H1 (cell line): ENCODE measurements at regions of chr2 and their contacts with region 1.

Region 1: GRCh38 chr2:20097879-20098714 is 46.7 kb upstream of the LAPTM4A start:
- DNase-seq: peak; percentile 91
- H3K4me3 ChIP-seq: no peak overlapping the region
- H3K27ac ChIP-seq: no peak overlapping the region
- H3K4me1 ChIP-seq: peaks cover 3 to 10% (median 5%) of the 10 kb centered on the region in 4 experiments; a peak in 6 of 7 replicates
- H3K27me3 ChIP-seq: no peaks in the 10 kb centered on the region
- CTCF ChIP-seq: peak; percentile 97 to 99 (median 99)
- EP300 ChIP-seq: peak in 1 of 2 experiments; percentile 97; a peak in 2 of 3 replicates
- POLR2A ChIP-seq: no peak
- RAD21 ChIP-seq: peak; percentile 99

Region 2: GRCh38 chr2:19955544-19956422 is 142.3 kb before region 1 on chr2:
- CTCF ChIA-PET with region 1: interaction called, 31 read pairs
- POLR2A ChIA-PET with region 1: no interaction called
- DNase-seq: peak; percentile 36 to 52
- H3K4me3 ChIP-seq: no peak overlapping the region
- H3K27ac ChIP-seq: no peak overlapping the region
- H3K4me1 ChIP-seq: no peaks in the 10 kb centered on the region
- H3K27me3 ChIP-seq: no peaks in the 10 kb centered on the region
- CTCF ChIP-seq: peak; percentile 58 to 98 (median 68)
- EP300 ChIP-seq: no peak
- POLR2A ChIP-seq: no peak
- RAD21 ChIP-seq: peak; percentile 89 to 90

Region 3: DNA sequence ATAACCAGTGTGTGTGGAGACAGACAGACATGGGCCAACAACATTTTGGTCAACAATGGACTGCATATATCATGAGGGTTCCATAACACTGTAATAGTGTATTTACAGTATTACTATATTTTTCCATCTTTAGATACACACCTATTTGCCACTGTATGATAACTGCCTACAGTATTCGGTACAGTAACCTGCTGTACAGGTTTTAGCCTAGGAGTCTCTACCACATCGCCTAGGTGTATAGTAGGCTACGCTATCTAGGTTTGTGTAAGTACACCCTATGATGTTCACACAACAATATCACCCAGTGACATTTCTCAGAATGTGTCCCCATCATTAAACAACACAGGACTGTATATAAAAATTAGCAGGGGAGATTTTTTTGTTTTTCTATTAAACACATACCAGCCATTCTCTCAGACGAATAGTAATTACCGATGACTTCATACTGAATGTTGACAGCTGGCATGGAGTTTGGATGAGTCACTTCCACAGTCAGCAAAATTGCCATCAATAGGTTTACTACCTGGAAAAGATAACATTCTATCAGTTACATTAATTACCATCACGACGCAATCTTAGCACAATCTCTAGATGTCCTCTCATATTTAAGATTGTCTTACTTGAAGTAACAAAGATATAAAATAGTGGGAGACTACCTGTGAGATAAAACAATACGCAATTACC is 57.5 kb before region 1 on chr2:
- CTCF ChIA-PET with region 1: interaction called, 12 read pairs
- POLR2A ChIA-PET with region 1: no interaction called
- DNase-seq: no peak
- H3K4me3 ChIP-seq: no peak overlapping the region
- H3K27ac ChIP-seq: no peak overlapping the region
- H3K4me1 ChIP-seq: 0 out of 7 replicates have a peak, but pooled peaks cover 0 to 2% (median 0%) of the 10 kb centered on the region in 4 experiments
- H3K27me3 ChIP-seq: no peaks in the 10 kb centered on the region
- CTCF ChIP-seq: no peak
- EP300 ChIP-seq: no peak
- POLR2A ChIP-seq: no peak
- RAD21 ChIP-seq: no peak

Region 4: DNA sequence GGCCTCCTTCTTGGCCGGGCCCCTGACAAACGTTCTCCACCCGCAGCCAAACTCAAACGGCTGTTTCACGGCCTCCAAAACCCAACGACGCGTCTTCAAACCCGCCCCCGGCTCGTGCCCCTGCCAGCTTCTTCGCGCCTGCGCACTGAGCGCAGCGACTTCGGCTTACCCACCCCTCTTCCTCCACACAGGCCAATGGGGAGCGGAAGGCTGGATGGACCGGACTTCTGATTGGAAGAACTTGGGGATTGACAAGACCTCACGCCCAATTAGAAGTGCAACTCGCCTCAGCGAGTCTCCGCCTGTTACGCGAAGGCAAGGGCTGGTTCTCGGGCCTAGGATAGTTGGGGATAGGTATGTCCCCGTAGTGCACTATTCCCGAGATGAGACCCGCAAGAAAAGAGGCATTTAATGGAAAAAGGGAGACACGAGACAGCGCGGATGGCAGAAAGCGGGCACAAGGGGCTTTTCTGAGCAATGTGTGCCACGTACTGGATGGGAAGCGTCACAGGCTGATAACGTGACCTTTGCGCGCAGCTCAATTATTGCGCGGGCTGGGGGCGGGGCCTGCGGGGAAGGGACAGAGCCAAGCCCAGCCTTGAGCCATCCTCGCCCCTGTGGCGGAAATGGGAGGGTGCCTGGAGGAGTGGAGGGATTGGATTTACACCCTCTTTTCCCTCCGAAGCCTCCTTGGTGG is 46.4 kb before region 1 on chr2 and contains the start of gene LAPTM4A:
- CTCF ChIA-PET with region 1: interaction called, 15 read pairs
- POLR2A ChIA-PET with region 1: interaction called, 3 read pairs
- DNase-seq: peak; percentile 96 to 99
- H3K4me3 ChIP-seq: peak within 1 kb of the TSS; percentile 85 to 88 (median 86)
- H3K27ac ChIP-seq: peak within 1 kb of the TSS; percentile 94
- H3K4me1 ChIP-seq: peaks cover 0 to 5% (median 0%) of the 10 kb centered on the region in 4 experiments; a peak in 3 of 7 replicates
- H3K27me3 ChIP-seq: no peaks in the 10 kb centered on the region
- CTCF ChIP-seq: no peak
- EP300 ChIP-seq: no peak
- POLR2A ChIP-seq: peak; percentile 78 to 79
- RAD21 ChIP-seq: peak; percentile 1 to 3; a peak in 1 of 4 replicates
- total RNA-seq, gene LAPTM4A: 187 and 193 TPM in 2 replicates

Region 5: GRCh38 chr2:20080839-20081415 is 17.2 kb before region 1 on chr2:
- CTCF ChIA-PET with region 1: interaction called, 19 read pairs
- POLR2A ChIA-PET with region 1: interaction called, 4 read pairs
- DNase-seq: no peak
- H3K4me3 ChIP-seq: peak overlapping the region in 1 of 4 experiments; percentile 7; a peak in 2 of 8 replicates
- H3K27ac ChIP-seq: no peak overlapping the region
- H3K4me1 ChIP-seq: peaks cover 4 to 9% (median 6%) of the 10 kb centered on the region in 4 experiments; a peak in 6 of 7 replicates
- H3K27me3 ChIP-seq: no peaks in the 10 kb centered on the region
- CTCF ChIP-seq: no peak
- EP300 ChIP-seq: no peak
- POLR2A ChIP-seq: no peak
- RAD21 ChIP-seq: no peak

Region 6: DNA sequence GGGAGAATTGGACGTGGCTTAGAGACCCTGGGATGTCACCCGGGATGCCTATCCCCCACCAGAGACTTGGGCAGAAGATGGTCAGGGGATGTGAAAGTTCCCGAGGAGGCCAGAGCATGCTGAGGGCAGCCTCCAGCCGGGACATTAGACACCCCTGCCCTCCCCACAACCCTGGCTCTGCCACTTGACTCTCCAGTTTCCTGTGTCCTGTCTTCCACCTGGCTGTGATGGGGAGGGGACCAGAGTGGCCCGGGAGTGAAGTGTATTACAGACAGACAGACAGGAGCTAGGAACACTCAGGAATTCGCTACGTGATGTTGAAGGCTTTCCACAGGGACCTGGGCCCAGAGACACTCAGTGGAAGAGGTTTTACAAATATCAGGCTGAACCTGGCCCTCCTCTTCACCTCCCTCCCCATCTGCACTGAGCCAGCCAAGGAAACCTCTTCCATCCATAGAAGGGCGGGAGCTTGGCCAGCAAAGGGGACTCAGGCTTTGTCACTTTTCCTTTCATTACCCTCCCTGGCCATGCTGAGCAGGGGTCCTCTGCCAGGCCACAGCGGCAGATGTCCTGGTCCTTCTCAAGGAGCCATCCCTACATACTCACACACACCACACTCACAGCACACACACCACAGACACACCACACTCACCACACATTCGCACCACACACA is 66.1 kb after region 1 on chr2:
- CTCF ChIA-PET with region 1: no interaction called
- POLR2A ChIA-PET with region 1: no interaction called
- DNase-seq: no peak
- H3K4me3 ChIP-seq: no peak overlapping the region
- H3K27ac ChIP-seq: no peak overlapping the region
- H3K4me1 ChIP-seq: peaks cover 0 to 15% (median 8%) of the 10 kb centered on the region in 4 experiments; a peak in 4 of 7 replicates
- H3K27me3 ChIP-seq: no peaks in the 10 kb centered on the region; a peak in 1 of 7 replicates
- CTCF ChIP-seq: no peak
- EP300 ChIP-seq: no peak
- POLR2A ChIP-seq: no peak
- RAD21 ChIP-seq: no peak